ENCODE measurements at regions of chr1 and their contacts with region 1.

Region 1: DNA sequence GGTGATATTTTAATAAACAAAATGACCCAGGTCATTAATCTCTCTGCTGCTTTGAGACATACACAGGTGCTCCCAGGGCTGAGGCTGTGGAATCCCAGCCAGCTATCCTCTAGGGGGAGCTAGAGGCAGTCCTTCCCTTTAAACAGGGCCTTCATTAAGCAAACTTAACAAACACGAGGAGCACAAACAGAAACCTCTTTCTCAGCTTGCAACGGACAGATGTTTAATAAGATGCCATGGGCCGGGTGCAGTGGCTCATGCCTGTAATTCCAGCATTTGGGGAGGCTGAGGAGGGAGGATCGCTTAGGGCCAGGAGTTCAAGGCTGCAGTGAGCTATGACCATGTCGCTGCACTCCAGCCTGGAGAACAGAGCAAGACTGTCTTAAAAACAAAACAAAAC is 106.7 kb downstream of the HIVEP3 start:
- DNase-seq: peak in 1 of 3 donors; percentile 29
- ATAC-seq: peak in 1 of 2 donors; percentile 8
- H3K4me3 ChIP-seq: no peak overlapping the region
- H3K27ac ChIP-seq: peak overlapping the region; percentile 44
- H3K4me1 ChIP-seq: peaks cover 10% of the 10 kb centered on the region
- H3K27me3 ChIP-seq: no peaks in the 10 kb centered on the region

Region 2: DNA sequence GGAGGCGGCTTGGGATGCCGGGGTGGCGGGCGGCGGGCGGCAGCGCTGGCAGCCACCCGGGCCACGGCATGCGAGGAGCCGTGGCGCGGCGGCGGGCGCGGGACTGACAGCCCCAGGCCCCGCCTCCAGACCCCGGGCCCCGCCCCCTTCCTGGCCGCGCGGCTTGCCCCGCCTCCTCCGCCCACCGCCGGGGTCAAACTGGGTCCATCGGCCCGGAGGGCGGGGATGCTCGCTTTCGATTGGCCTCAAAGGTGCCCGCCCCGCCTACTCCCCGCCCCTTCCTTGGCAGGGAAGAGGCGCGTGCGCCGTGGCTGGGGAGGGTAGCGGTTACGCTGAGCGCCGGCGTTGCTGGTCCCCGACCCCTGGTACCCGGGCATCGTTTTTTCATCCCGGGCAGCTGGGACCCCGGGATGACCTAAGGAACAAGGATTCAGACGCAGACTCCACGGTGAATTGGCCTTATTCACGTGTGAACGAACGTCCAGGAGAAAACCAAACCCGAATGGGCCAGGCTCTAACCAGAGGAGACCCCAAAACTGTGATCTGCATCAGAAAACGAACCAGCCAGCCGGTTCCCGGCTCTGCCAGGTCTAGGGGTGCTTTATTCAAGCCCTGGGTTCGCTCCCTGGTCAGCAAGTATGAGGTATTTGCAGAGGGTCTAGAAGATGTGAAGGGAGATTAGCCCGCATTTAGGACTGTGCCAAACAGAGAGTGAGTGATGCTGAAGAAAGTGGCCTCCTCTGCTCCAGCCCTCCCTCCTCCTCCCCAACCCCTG is 224.0 kb after region 1 on chr1:
- intact Hi-C with region 1: loop called in 1 of 4 experiments (anchors 10 kb)
- DNase-seq: peak; percentile 98 to 99 (median 99)
- ATAC-seq: peak; percentile 98
- H3K4me3 ChIP-seq: peak overlapping the region; percentile 81
- H3K27ac ChIP-seq: peak overlapping the region; percentile 15
- H3K4me1 ChIP-seq: no peaks in the 10 kb centered on the region
- H3K27me3 ChIP-seq: no peaks in the 10 kb centered on the region

Region 3: GRCh38 chr1:42214447-42214871 is 402.4 kb after region 1 on chr1:
- intact Hi-C with region 1: no loop called
- DNase-seq: peak in 1 of 3 donors; percentile 31
- ATAC-seq: peak; percentile 73 to 78
- H3K4me3 ChIP-seq: no peak overlapping the region
- H3K27ac ChIP-seq: no peak overlapping the region
- H3K4me1 ChIP-seq: peaks cover 10% of the 10 kb centered on the region
- H3K27me3 ChIP-seq: no peaks in the 10 kb centered on the region

Measured in right cardiac atrium (tissue), 5 donors.